AG04450 (cell line): ENCODE measurements at regions of chr16 and their contacts with region 1.

Region 1: DNA sequence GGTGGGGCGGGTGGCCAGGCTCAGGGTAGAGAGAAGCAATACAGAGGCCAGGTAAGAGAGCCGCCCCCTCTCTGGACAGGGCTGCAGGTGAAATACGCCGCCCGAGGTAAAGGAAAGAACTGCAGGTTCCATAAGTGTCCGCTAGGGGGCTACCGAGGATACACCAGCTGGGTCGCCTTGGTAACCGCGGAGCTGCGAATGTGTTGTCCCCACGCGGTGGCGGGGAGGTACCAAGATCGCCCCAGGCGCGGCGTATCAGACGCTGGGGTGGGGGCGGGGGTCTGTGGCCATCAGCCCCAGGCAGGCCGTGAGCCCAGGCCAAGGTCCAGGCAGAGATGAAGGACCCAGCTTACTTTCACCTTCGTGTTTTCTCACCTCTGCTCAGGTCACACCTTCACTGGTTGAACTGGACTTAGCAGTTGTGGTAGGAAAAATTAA is 18.4 kb upstream of the ZFP90 start:
- DNase-seq: peak; percentile 18
- H3K4me3 ChIP-seq: peak overlapping the region; percentile 46
- H3K27ac ChIP-seq: no peak overlapping the region
- H3K27me3 ChIP-seq: no peaks in the 10 kb centered on the region
- CTCF ChIP-seq: peak; percentile 98

Region 2: DNA sequence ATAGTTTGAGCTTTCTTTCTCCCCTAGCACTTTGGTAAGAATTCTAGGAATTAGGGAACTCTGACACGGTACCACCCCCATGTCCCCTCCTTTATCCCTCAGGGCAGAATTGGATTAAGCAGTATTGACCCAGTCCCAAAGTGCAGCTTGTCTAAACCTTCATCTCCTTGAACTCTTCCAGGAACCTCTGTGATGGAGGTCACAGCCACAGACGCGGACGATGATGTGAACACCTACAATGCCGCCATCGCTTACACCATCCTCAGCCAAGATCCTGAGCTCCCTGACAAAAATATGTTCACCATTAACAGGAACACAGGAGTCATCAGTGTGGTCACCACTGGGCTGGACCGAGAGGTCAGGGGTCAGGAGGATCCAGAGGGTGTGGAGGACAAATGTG is 290.8 kb after region 1 on chr16:
- CTCF ChIA-PET with region 1: interaction called, 10 read pairs
- POLR2A ChIA-PET with region 1: no interaction called
- DNase-seq: no peak
- H3K4me3 ChIP-seq: no peak overlapping the region
- H3K27ac ChIP-seq: no peak overlapping the region
- H3K27me3 ChIP-seq: peaks cover 10% of the 10 kb centered on the region
- CTCF ChIP-seq: no peak